Activated T-helper 1 cell treated with anti-CD3 and anti-CD28 coated beads, Interleukin-12 subunit alpha, Interleukin-12 subunit beta, Interleukin-2, Interleukin-4 antibody, amounts not matched to agents 30 ng/mL and 10 ng/mL and 1 ng/mL, durations not matched to agents 14 hours and 24 hours and 36 hours (primary cell): ENCODE measurements at regions of chr5 and their contacts with region 1.

Region 1: GRCh38 chr5:154857530-154858296 is 714 bp upstream of the CNOT8 start:
- DNase-seq: peak; percentile 81
- H3K4me3 Mint-ChIP-seq: peak overlapping the region; percentile 99
- H3K27ac Mint-ChIP-seq: peak overlapping the region; percentile 100
- H3K4me1 Mint-ChIP-seq: peaks cover 41% of the 10 kb centered on the region
- H3K27me3 Mint-ChIP-seq: no peaks in the 10 kb centered on the region

Region 2: GRCh38 chr5:154038707-154039457 is 818.8 kb before region 1 on chr5 and contains the starts of genes FAM114A2 and MFAP3:
- intact Hi-C with region 1: loop called (anchors 2 kb)
- DNase-seq: peak; percentile 88
- H3K4me3 Mint-ChIP-seq: peak within 1 kb of the TSS; percentile 98
- H3K27ac Mint-ChIP-seq: peak within 1 kb of the TSS; percentile 94
- H3K4me1 Mint-ChIP-seq: peaks cover 50% of the 10 kb centered on the region
- H3K27me3 Mint-ChIP-seq: no peaks in the 10 kb centered on the region
- total RNA-seq, gene FAM114A2: 28.3 and 28.7 TPM in 2 replicates
- total RNA-seq, gene MFAP3: 24.3 and 29.9 TPM in 2 replicates

Region 3: DNA sequence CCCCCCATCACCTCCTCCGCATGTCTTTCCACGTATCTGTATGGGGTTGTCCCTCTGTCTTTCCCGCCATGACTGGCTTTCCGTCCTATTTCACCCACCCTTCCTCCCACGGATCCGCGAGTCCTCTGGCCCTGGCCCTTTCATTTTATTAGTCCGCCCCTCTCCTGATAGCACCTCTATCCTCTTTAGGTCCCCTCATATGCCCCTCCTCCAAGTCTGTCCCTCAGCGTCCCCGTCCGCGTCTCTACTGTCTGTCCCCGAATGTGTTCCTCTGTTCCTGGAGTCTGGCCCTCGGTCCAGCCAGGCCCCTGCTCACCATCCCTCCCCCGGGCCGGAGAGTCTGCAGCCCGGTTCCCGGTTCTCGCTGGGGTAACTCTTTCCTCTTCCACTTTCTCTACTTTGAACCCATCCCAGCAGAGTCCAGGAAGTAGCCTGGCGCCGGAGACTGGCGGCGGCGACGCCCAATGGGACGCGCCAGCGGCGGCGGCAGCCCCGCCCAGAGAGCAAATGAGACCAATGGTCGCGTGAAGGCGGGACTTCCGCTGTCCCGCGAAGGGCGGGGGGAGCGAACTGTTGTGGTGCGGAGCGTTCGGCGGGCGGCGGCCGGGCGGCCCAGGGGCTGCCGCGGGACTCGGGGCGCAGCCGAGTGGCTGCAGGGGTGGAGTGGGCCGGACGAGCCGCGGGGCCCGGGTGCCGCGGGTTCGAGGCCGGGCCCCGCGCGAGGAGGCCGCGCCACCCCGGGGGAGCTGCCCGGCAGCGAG is 412.1 kb before region 1 on chr5 and contains the start of gene SAP30L:
- intact Hi-C with region 1: loop called (anchors 1 kb)
- DNase-seq: peak; percentile 96
- H3K4me3 Mint-ChIP-seq: peak within 1 kb of the TSS; percentile 99
- H3K27ac Mint-ChIP-seq: peak within 1 kb of the TSS; percentile 95
- H3K4me1 Mint-ChIP-seq: peaks cover 65% of the 10 kb centered on the region
- H3K27me3 Mint-ChIP-seq: no peaks in the 10 kb centered on the region
- total RNA-seq, gene SAP30L: 37.5 and 44.4 TPM in 2 replicates

Region 4: DNA sequence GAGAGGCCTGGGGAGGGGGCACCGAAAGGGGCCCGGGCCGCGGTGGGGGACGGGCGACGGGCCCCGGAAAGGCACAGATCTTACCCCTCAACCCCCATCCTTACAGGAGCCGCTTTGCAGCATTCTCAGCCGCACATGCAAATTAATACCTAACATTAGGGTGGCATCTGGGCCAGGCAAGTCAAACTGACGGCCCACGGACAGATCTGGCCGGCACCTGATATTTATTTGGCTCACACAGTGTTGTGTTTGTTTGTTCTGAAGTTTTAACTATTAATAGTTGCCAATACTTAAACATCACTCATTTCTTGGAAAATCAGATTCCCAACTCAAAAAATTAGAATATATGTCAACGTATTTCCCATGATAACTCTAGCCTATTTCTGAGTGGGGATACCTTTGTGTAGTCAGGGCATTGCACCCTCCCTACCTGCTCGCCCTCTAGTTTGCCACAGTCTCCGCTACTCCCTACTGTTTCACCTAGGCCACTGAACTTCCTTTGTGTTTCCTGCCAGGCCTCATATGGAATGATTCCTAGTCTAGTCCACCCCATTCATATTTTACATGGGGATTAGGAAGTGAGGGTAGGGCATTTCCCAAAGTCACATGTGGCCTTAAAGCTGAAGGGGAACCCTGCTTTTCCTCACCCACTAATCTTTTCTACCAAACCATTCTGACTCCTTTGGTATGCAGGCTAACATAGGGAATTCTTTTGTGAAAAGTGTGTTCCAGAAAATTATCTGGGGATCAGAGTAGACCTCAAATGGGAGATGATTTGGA is 174.4 kb before region 1 on chr5:
- intact Hi-C with region 1: loop called (anchors 1 kb)
- DNase-seq: no peak
- H3K4me3 Mint-ChIP-seq: peak overlapping the region; percentile 29
- H3K27ac Mint-ChIP-seq: no peak overlapping the region
- H3K4me1 Mint-ChIP-seq: peaks cover 6% of the 10 kb centered on the region
- H3K27me3 Mint-ChIP-seq: peaks cover 30% of the 10 kb centered on the region

Region 5: DNA sequence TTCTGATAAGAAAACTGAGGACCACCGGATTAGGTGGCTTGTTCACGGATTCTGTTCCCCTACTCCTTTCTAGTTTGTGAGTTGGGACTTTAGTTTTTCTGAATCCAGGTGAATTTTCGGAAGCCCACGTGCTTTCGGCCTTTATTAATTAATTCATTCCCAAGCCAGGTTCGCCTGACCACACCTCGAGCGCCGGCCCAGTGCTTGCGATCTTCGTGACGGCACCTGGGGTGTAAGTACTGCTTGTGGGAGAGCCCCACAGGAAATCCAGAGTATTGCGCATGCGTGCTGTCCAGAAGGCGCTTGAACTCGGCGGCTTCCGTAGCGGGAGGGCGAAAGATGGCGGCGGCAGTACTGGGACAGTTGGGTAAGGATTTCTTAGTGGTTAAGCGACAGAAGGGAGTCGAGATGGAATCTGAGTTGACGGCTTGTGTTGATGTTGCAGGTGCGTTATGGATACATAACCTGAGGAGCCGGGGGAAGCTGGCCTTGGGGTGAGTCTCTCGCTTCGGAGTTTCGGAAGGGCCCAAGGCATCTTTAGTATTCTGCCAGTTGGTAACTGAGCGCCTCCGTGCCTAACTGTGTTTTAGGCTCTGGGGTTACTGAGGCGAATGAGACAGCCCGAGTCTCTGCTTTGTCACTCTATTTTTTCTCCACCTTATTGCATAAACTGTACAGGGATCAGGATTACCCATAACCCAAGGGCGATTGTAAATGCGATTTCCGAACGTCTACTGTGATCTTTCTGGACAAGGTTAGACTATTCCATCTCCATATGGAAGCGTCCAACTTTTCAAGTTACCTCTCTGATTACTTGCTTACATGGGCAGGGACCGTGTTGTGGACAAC is 83.3 kb after region 1 on chr5 and contains the start of gene MRPL22:
- intact Hi-C with region 1: loop called (anchors 1 kb)
- DNase-seq: peak; percentile 93
- H3K4me3 Mint-ChIP-seq: peak within 1 kb of the TSS; percentile 94
- H3K27ac Mint-ChIP-seq: peak within 1 kb of the TSS; percentile 93
- H3K4me1 Mint-ChIP-seq: peaks cover 18% of the 10 kb centered on the region
- H3K27me3 Mint-ChIP-seq: peaks cover 3% of the 10 kb centered on the region
- total RNA-seq, gene MRPL22: 73.1 and 78.1 TPM in 2 replicates